Activated CD4-positive, alpha-beta memory T cell treated with anti-CD3 and anti-CD28 coated beads, Interleukin-2, amount 10 ng/mL, durations not matched to agents 7 days and 5 days (primary cell): ENCODE measurements at regions of chr11 and their contacts with region 1.

Region 1: DNA sequence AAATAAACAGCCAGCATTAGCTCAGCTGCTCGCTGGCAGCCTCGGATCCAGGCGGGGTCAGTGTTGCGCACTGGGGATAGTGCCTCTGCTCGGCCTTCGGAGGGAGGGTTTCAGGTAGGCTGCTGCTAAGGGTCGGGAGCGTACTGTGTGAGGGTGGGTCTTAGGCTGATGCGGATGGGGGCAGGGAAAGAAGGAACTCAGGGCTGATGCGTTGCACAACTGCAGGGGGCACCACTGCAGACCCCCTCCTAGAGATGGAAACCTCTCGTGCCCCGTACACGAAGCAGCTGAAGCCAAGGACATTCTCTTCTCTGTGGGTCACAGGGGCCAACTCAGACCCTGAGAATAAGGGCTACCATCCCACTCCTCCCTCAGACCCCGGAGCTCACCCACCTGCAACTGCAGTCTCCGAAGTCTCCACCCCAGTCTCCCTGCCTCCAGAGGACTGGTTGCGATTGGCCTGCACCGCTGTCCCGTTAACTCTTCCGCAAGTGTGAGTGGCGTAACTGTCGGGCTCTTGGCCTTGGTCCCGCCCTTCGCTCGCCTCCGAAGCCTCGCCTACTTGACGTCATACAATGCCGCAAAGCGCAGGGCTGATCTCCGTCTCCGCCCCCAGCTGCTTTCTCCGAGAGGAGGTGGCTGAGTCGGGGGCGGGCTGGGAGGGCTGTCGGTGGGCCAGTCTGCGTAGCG is at the start of gene KBTBD3:
- DNase-seq: peak; percentile 99
- H3K4me3 Mint-ChIP-seq: peak within 1 kb of the TSS; percentile 91
- H3K27ac Mint-ChIP-seq: peak within 1 kb of the TSS; percentile 91
- H3K4me1 Mint-ChIP-seq: peaks cover 47% of the 10 kb centered on the region
- H3K27me3 Mint-ChIP-seq: no peaks in the 10 kb centered on the region
- total RNA-seq, gene KBTBD3: 9.2 to 11.6 TPM

Region 2: DNA sequence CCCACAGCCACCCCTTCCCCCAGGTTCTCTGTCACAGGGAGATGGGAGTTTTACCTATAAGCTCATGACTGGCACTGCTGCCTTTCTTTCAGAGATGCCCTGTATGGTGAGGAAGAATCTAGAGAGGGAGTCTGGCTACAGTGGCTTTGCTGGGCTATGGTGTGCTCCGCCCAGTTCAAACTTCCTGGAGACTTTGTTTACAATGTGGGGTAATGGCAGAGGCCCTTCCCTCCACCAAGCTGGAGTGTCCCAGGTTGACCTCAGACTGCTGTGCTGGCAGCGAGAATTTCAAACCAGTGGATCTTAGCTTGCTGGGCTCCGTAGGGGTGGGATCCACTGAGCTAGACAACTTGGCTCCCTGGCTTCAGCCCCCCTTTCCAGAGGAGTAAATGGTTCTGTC is 198.6 kb before region 1 on chr11:
- CTCF ChIA-PET with region 1: no interaction called
- POLR2A ChIA-PET with region 1: no interaction called
- DNase-seq: no peak
- H3K4me3 Mint-ChIP-seq: no peak overlapping the region
- H3K27ac Mint-ChIP-seq: no peak overlapping the region
- H3K4me1 Mint-ChIP-seq: no peaks in the 10 kb centered on the region
- H3K27me3 Mint-ChIP-seq: no peaks in the 10 kb centered on the region

Region 3: DNA sequence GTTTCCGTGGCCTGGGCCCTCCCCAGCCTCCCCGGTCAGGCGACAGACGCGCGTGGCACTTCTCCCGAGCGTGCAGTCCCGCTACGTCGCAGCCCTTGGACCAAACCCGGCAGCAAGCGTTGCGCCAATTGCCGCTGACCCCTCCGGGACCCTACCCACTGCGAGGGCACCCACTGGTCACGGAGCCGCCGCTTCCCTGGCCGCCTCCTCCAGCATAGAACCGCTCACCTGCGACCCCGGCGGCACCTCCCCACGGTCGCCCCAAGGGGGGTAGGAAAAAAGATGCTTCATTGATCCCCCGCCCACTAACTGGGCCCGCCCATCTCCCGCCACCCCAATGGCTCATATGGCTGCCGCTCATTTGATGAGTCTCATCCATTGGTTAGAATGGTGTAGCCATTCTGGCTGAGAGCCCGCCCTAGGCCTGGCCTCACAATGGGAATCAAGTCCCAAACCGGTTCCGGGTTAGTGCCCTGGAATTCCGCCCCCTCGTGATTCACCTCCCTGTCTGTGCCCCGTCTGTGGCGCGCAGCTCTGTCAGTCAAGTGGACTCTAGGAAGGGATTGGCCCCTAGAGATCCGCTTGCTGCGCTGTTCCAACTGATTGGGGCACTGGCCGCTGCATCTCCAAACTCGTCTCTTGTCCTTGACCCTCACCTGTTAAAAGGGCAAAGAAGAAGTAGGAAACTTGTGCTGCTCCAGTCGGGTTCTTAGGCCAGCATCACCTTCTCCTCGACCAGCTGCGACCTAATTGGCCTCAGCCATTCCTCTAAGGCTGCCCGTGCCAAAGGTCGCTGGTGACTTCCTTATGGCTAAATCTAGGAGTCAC is 54.9 kb before region 1 on chr11 and contains the start of gene MSANTD4:
- CTCF ChIA-PET with region 1: interaction called, 7 read pairs
- POLR2A ChIA-PET with region 1: interaction called, 17 read pairs
- DNase-seq: peak; percentile 97
- H3K4me3 Mint-ChIP-seq: peak within 1 kb of the TSS; percentile 87
- H3K27ac Mint-ChIP-seq: peak within 1 kb of the TSS; percentile 71
- H3K4me1 Mint-ChIP-seq: peaks cover 40% of the 10 kb centered on the region
- H3K27me3 Mint-ChIP-seq: peaks cover 5% of the 10 kb centered on the region
- total RNA-seq, gene MSANTD4: 14.7 to 16.7 TPM

Region 4: DNA sequence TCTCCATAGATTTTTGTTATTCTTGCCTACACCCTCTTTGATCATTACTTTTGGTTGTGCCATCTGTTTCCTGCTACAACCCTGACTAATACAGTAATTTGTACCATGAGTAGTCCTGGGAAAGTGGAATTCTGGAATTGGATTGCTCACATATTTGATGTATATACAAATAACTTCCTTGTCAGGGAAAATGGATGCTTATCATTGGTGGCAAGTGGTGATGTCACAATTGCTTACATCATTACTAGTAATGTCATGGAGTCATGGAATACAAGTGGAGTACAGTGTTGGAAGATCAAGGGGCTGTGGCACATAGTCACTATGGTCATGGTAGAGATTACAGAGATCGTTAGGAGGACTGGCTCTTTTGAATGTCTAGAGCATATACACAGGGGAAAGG is 24.8 kb after region 1 on chr11:
- CTCF ChIA-PET with region 1: no interaction called
- POLR2A ChIA-PET with region 1: no interaction called
- DNase-seq: no peak
- H3K4me3 Mint-ChIP-seq: no peak overlapping the region
- H3K27ac Mint-ChIP-seq: no peak overlapping the region
- H3K4me1 Mint-ChIP-seq: no peaks in the 10 kb centered on the region
- H3K27me3 Mint-ChIP-seq: no peaks in the 10 kb centered on the region